ENCODE measurements at regions of chr9 and their contacts with region 1.

Region 1: DNA sequence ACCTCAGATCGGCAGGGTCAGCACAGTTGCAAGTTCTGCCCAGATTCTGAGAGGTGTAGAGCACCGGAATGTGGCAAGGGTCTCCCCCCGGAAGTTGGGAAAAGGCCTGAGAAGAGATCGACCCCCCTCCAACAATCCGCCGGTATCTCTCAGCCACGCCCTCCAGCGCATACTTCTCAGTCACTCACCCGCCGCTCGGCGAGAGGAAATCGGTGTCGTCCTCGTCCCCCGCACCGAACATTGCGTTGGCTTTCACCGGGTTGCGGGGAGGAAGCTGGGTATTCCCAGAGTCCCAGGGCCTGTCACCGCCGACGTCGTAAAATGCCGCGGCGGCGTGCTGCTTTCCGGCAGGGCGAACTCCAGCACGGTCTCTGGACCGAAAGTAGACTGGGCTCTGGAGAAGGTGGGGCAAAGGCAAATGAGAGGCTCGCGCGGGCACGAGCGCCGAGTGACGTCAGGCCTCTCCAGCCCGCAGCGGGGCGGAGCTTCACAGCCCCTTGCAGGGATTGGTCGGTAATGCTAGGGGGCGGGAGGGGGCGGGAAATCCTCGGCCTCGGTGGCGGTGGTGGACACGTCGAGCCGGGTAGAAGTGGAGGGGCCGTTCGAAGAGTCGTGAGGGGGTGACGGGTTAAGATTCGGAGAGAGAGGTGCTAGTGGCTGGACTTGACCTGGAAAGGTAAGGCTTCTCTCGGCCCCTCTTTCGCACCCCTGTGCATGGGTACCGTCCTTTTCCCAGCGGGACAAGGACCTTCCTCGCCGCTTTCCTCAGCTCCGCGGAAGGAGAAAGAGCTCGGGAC is at the starts of genes FKBP15 and SLC31A1:
- DNase-seq: peak; percentile 96
- H3K4me3 Mint-ChIP-seq: peak within 1 kb of the TSS; percentile 98
- H3K27ac Mint-ChIP-seq: peak within 1 kb of the TSS; percentile 97
- H3K4me1 Mint-ChIP-seq: peaks cover 64% of the 10 kb centered on the region
- H3K27me3 Mint-ChIP-seq: no peaks in the 10 kb centered on the region
- total RNA-seq, gene FKBP15: 34.9 and 35.8 TPM in 2 replicates
- total RNA-seq, gene SLC31A1: 16.1 and 17.6 TPM in 2 replicates

Region 2: GRCh38 chr9:113056191-113057106 is 164.8 kb before region 1 on chr9 and contains the start of gene ZFP37:
- intact Hi-C with region 1: no loop called
- DNase-seq: peak; percentile 38
- H3K4me3 Mint-ChIP-seq: no peak within 1 kb of the TSS
- H3K27ac Mint-ChIP-seq: no peak within 1 kb of the TSS
- H3K4me1 Mint-ChIP-seq: no peaks in the 10 kb centered on the region
- H3K27me3 Mint-ChIP-seq: no peaks in the 10 kb centered on the region
- total RNA-seq, gene ZFP37: 0.16 and 0.32 TPM in 2 replicates

Region 3: GRCh38 chr9:113150670-113151611 is 70.3 kb before region 1 on chr9 and contains the start of gene SLC31A2:
- intact Hi-C with region 1: loop called (anchors 1 kb)
- DNase-seq: peak; percentile 84
- H3K4me3 Mint-ChIP-seq: peak within 1 kb of the TSS; percentile 80
- H3K27ac Mint-ChIP-seq: peak within 1 kb of the TSS; percentile 44
- H3K4me1 Mint-ChIP-seq: peaks cover 34% of the 10 kb centered on the region
- H3K27me3 Mint-ChIP-seq: peaks cover 13% of the 10 kb centered on the region
- total RNA-seq, gene SLC31A2: 6.0 and 6.5 TPM in 2 replicates

Region 4: DNA sequence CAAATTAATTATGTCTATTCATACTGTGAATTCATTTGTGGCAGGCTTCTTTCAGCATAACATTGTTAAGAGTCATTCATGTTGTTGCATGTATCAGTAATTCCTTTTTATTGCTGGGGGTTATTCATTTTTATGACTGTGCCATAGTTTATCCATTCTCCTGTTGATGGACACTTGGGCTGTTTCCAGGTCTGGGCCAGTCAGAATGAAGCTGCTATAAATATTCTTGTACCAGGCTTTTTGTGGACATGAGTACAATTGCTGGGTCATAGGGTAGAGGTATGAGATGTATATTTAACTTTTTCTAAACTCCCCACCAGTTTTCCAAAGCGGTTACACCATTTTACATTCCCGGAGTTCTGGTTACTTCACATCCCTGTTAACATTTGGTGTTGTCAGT is 67.9 kb after region 1 on chr9:
- intact Hi-C with region 1: no loop called
- DNase-seq: no peak
- H3K4me3 Mint-ChIP-seq: no peak overlapping the region
- H3K27ac Mint-ChIP-seq: no peak overlapping the region
- H3K4me1 Mint-ChIP-seq: no peaks in the 10 kb centered on the region
- H3K27me3 Mint-ChIP-seq: no peaks in the 10 kb centered on the region

Region 5: GRCh38 chr9:113340017-113340699 is 119.0 kb after region 1 on chr9 and contains the start of gene WDR31:
- intact Hi-C with region 1: loop called (anchors 2 kb)
- DNase-seq: peak; percentile 78
- H3K4me3 Mint-ChIP-seq: peak within 1 kb of the TSS; percentile 80
- H3K27ac Mint-ChIP-seq: peak within 1 kb of the TSS; percentile 89
- H3K4me1 Mint-ChIP-seq: peaks cover 49% of the 10 kb centered on the region
- H3K27me3 Mint-ChIP-seq: no peaks in the 10 kb centered on the region
- total RNA-seq, gene WDR31: 1.9 and 2.2 TPM in 2 replicates

Region 6: GRCh38 chr9:113349445-113350094 is 128.4 kb after region 1 on chr9 and contains the start of gene BSPRY:
- intact Hi-C with region 1: loop called (anchors 1 kb)
- DNase-seq: peak; percentile 51
- H3K4me3 Mint-ChIP-seq: peak within 1 kb of the TSS; percentile 93
- H3K27ac Mint-ChIP-seq: peak within 1 kb of the TSS; percentile 92
- H3K4me1 Mint-ChIP-seq: peaks cover 68% of the 10 kb centered on the region
- H3K27me3 Mint-ChIP-seq: no peaks in the 10 kb centered on the region
- total RNA-seq, gene BSPRY: 12.3 and 12.8 TPM in 2 replicates

Region 7: DNA sequence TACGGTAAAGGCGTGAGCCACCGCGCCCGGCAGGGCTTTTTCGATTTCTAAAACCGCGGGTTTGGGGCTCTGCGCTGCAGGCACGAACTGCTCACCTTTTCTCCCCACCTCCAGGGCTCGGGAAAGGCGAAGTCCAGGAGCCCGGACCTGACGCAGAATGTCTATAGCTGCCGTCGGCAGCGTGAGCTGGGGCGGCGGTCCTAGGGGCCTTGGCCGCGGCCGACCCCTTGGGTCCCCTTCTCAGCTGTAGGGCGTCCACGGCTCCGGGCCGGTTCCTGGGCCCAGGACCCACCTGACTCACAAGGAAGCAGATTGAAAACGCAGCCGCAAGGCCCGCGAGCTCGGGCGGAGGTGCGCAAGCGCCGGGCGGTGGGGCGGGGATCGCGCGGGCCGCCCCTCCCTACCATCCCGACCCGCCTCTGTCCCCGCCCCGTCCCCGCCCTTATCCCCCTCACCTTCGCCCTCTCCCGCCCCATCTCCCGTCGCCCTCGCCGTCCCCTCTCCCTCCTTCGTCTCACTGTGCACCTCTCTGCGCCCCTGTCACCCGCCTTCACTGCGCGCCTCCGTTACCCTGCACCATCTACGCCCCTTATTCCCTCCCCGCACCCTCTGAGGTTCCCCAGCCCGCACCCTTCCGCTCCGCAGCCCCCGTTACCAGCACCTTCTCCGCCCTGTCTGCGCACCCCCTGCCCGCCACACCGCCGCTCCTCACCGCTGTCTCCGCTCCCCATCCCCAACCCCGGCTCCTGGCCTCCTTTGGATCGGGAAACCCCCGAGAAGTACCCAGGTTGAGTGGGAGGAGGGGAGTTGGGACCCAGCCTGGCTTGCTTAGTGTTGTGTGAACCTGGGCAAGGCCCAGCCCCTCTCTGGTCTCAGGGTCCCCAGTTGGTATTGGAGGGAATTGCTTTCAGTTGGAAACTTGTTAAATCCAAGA is 155.7 kb after region 1 on chr9 and contains the start of gene HDHD3:
- intact Hi-C with region 1: loop called (anchors 1 kb)
- DNase-seq: peak; percentile 78
- H3K4me3 Mint-ChIP-seq: peak within 1 kb of the TSS; percentile 83
- H3K27ac Mint-ChIP-seq: peak within 1 kb of the TSS; percentile 71
- H3K4me1 Mint-ChIP-seq: peaks cover 18% of the 10 kb centered on the region
- H3K27me3 Mint-ChIP-seq: no peaks in the 10 kb centered on the region
- total RNA-seq, gene HDHD3: 15.7 and 18.5 TPM in 2 replicates

Region 8: GRCh38 chr9:113401027-113401792 is 180.0 kb after region 1 on chr9 and contains the start of gene ALAD:
- intact Hi-C with region 1: loop called (anchors 1 kb)
- DNase-seq: peak; percentile 99
- H3K4me3 Mint-ChIP-seq: peak within 1 kb of the TSS; percentile 89
- H3K27ac Mint-ChIP-seq: peak within 1 kb of the TSS; percentile 67
- H3K4me1 Mint-ChIP-seq: peaks cover 25% of the 10 kb centered on the region
- H3K27me3 Mint-ChIP-seq: no peaks in the 10 kb centered on the region
- total RNA-seq, gene ALAD: 23.0 and 23.7 TPM in 2 replicates

Region 9: DNA sequence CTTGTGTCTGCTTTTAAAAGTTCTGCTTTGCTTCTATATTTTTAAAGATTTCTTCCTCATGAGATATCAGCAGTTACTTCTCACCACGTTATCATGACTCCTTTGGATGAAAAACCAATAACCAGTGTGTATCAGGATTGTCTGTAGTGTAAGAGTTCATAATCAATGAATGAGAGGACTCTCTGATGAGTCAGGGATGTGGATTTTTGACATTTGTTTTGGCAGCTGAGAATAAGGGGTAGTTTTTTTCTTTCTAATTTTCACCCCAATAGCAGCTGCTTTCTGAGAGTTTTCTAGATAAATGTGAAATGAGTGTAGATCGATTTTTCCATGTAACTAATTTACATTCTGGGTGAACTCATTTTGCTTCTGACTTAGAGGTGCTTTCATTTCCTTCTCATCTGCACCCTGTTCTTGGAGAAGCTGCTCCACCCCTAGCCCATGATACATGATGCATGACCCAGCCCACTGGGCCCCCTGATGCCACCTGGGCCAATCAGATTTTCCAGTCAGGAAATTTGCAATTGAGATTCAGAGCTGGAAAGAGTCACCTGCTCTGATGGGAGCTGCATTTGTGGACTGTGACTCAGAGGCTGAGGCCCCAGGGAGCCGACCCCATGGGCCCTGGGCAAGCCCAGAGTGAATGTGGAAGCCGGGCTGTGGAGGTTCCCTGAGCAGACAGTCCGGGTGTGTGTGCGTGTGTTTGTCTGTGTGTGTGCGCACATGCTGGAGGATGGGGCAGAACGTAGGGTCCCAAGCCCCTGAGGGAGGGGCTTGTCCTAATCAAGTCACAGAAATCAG is 401.6 kb after region 1 on chr9:
- intact Hi-C with region 1: loop called (anchors 2 kb)
- DNase-seq: peak; percentile 18
- H3K4me3 Mint-ChIP-seq: peak overlapping the region; percentile 43
- H3K27ac Mint-ChIP-seq: peak overlapping the region; percentile 93
- H3K4me1 Mint-ChIP-seq: peaks cover 47% of the 10 kb centered on the region
- H3K27me3 Mint-ChIP-seq: peaks cover 2% of the 10 kb centered on the region

Measured in activated T-helper 1 cell treated with anti-CD3 and anti-CD28 coated beads, Interleukin-12 subunit alpha, Interleukin-12 subunit beta, Interleukin-2, Interleukin-4 antibody, amounts not matched to agents 30 ng/mL and 10 ng/mL and 1 ng/mL, durations not matched to agents 14 hours and 24 hours and 36 hours (primary cell).